PC-3 (cell line): ENCODE measurements at regions of chr18 and their contacts with region 1.

Region 1: DNA sequence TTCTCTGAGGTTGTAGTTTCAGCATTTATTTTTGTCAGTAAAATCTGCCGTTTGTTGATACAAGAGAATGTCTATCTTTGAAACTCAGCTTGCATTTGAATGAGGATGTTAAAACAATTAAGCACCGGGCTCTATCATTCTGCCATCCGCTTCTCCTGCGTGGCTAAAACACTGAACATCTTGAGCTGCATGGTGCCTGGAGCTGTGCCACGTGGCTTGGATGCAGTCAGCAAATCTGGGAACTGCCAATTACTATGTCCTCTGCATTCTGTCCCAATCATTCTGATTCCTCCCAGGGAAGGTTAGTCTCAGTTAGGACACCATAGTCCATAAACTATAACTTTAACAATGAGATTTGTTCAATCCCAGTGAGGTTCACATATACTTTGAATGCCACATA is 598.4 kb downstream of the FBXO15 start:
- DNase-seq: no peak
- ATAC-seq: no peak
- H3K4me3 ChIP-seq: no peak overlapping the region
- H3K27ac ChIP-seq: no peak overlapping the region
- H3K4me1 ChIP-seq: peaks cover 11% of the 10 kb centered on the region
- H3K27me3 ChIP-seq: no peaks in the 10 kb centered on the region
- CTCF ChIP-seq: no peak

Region 2: GRCh38 chr18:73235491-73235890 is 313.7 kb before region 1 on chr18:
- CTCF ChIA-PET with region 1: no interaction called
- POLR2A ChIA-PET with region 1: no interaction called
- intact Hi-C with region 1: no loop called
- DNase-seq: peak; percentile 93
- ATAC-seq: peak; percentile 100
- H3K4me3 ChIP-seq: no peak overlapping the region
- H3K27ac ChIP-seq: peak overlapping the region; percentile 50
- H3K4me1 ChIP-seq: peaks cover 12% of the 10 kb centered on the region
- H3K27me3 ChIP-seq: no peaks in the 10 kb centered on the region
- CTCF ChIP-seq: no peak

Region 3: GRCh38 chr18:73614812-73615211 is 65.6 kb after region 1 on chr18:
- CTCF ChIA-PET with region 1: no interaction called
- POLR2A ChIA-PET with region 1: no interaction called
- intact Hi-C with region 1: loop called (anchors 5 kb)
- DNase-seq: peak; percentile 96
- ATAC-seq: peak; percentile 94
- H3K4me3 ChIP-seq: no peak overlapping the region
- H3K27ac ChIP-seq: peak overlapping the region; percentile 46
- H3K4me1 ChIP-seq: peaks cover 40% of the 10 kb centered on the region
- H3K27me3 ChIP-seq: no peaks in the 10 kb centered on the region
- CTCF ChIP-seq: no peak

Region 4: DNA sequence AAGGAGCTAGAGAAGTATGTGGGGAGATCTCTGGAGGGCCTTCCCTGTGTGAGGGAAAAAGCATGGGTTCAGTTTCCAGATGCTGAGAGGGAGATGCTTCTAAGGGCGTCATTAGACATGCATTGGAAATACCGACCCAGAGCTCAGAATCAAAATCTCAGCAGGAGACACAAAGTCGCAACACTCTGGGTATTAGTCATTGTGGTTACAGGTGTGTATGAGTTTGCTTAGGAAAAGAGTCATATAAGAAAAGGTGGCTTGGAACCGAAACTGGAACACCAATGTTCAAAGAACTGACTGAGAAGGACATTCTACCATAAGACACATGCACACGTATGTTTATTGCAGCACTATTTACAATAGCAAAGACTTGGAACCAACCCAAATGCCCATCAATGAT is 121.3 kb after region 1 on chr18:
- CTCF ChIA-PET with region 1: no interaction called
- POLR2A ChIA-PET with region 1: no interaction called
- intact Hi-C with region 1: loop called (anchors 1 kb)
- DNase-seq: peak; percentile 91
- ATAC-seq: peak; percentile 93
- H3K4me3 ChIP-seq: no peak overlapping the region; the same call in 1 of the 2 replicates
- H3K27ac ChIP-seq: peak overlapping the region; percentile 89
- H3K4me1 ChIP-seq: peaks cover 23% of the 10 kb centered on the region
- H3K27me3 ChIP-seq: no peaks in the 10 kb centered on the region
- CTCF ChIP-seq: no peak

Region 5: GRCh38 chr18:73774811-73775509 is 225.7 kb after region 1 on chr18:
- CTCF ChIA-PET with region 1: no interaction called
- POLR2A ChIA-PET with region 1: no interaction called
- intact Hi-C with region 1: loop called (anchors 10 kb)
- DNase-seq: peak; percentile 80
- ATAC-seq: peak; percentile 99
- H3K4me3 ChIP-seq: peak overlapping the region; percentile 56
- H3K27ac ChIP-seq: no peak overlapping the region
- H3K4me1 ChIP-seq: peaks cover 14% of the 10 kb centered on the region
- H3K27me3 ChIP-seq: no peaks in the 10 kb centered on the region
- CTCF ChIP-seq: peak; percentile 68